ENCODE measurements at regions of chr6 and their contacts with region 1.

Region 1: GRCh38 chr6:125314019-125314581 is 12.3 kb upstream of the HDDC2 start:
- DNase-seq: peak; percentile 69 to 83
- ATAC-seq: peak; percentile 91
- H3K4me3 ChIP-seq: no peak overlapping the region
- H3K27ac ChIP-seq: no peak overlapping the region
- H3K4me1 ChIP-seq: peaks cover 2% of the 10 kb centered on the region in 2 donors
- H3K27me3 ChIP-seq: no peaks in the 10 kb centered on the region

Region 2: DNA sequence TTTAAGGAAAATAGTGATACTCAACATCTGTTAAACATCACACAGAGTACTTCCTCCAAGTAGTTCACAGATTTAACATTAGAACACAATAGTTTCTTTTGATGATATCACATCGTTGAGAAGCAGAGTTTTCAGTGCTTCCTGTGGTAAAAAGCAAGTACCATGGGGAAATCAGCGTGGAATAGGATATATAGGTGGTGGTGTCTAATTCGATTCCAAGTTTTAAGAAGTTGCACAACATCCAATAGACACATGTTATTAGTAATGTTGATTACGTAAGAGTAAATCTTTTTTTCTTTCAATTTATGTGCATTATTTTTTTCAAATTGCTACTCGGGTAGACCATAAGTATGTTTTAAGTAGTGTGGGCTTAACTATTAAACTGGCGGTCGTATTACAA is 1149.8 kb before region 1 on chr6:
- intact Hi-C with region 1: no loop called
- DNase-seq: no peak
- ATAC-seq: no peak
- H3K4me3 ChIP-seq: no peak overlapping the region
- H3K27ac ChIP-seq: no peak overlapping the region
- H3K4me1 ChIP-seq: no peaks in the 10 kb centered on the region
- H3K27me3 ChIP-seq: no peaks in the 10 kb centered on the region

Region 3: DNA sequence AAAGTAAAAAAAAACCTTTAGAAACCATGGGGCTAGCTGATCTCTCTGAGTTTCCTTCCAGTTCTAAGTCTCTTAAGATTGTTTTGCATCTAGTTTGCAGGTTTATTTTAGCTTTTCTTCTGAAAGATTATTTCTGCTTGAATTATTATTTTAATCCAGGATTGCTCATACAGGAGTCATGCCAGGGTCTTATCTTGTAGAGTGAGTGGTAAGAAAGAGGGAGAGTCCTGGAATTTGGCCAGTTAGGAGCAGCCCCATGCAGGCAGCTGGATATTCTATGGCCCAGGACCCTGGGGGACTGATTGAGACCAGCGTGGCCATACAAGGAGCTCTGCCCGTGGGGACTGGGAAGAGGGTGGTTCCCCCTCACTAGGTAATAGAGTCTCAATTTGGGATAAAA is 256.4 kb after region 1 on chr6:
- intact Hi-C with region 1: loop called in 1 of 2 experiments (anchors 10 kb)
- DNase-seq: no peak
- ATAC-seq: peak; percentile 38
- H3K4me3 ChIP-seq: no peak overlapping the region
- H3K27ac ChIP-seq: peak overlapping the region in 1 of 2 donors; percentile 48
- H3K4me1 ChIP-seq: peaks cover 1 to 22% of the 10 kb centered on the region in 2 donors
- H3K27me3 ChIP-seq: no peaks in the 10 kb centered on the region

Region 4: DNA sequence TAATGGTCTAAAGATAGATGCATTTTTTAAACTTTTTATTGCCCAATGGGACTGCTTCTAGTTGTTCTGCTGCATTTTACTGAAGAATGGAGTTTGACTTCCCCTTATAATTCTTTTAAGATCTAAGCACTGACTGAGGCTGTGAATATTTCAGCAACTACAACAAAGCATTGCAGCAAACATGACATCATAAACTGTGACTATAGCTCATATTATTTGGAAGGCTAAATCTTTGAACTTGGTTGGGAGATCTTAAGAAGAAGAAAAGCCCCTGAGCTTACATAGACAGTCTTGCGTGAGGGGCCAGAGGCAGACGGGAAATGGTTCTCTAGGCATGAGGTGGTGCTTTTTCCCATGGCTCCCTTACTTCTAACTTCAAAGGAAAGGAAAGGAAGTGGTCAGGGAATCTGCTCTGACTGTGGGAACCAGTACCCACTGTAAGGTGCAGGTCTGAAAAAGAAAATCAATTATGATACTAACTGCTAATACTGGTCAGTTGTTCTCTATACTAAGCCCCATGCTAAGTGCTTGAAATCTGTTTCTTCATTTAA is 450.1 kb after region 1 on chr6:
- intact Hi-C with region 1: loop called (anchors 2 kb)
- DNase-seq: no peak
- ATAC-seq: no peak
- H3K4me3 ChIP-seq: no peak overlapping the region
- H3K27ac ChIP-seq: peak overlapping the region; percentile 36 to 76
- H3K4me1 ChIP-seq: peaks cover 0 to 2% of the 10 kb centered on the region in 2 donors
- H3K27me3 ChIP-seq: no peaks in the 10 kb centered on the region

Region 5: GRCh38 chr6:125769147-125769783 is 455.2 kb after region 1 on chr6:
- intact Hi-C with region 1: loop called (anchors 2 kb)
- DNase-seq: no peak
- ATAC-seq: no peak
- H3K4me3 ChIP-seq: no peak overlapping the region
- H3K27ac ChIP-seq: peak overlapping the region in 1 of 2 donors; percentile 71
- H3K4me1 ChIP-seq: peaks cover 0 to under 1% of the 10 kb centered on the region in 2 donors
- H3K27me3 ChIP-seq: no peaks in the 10 kb centered on the region

Region 6: DNA sequence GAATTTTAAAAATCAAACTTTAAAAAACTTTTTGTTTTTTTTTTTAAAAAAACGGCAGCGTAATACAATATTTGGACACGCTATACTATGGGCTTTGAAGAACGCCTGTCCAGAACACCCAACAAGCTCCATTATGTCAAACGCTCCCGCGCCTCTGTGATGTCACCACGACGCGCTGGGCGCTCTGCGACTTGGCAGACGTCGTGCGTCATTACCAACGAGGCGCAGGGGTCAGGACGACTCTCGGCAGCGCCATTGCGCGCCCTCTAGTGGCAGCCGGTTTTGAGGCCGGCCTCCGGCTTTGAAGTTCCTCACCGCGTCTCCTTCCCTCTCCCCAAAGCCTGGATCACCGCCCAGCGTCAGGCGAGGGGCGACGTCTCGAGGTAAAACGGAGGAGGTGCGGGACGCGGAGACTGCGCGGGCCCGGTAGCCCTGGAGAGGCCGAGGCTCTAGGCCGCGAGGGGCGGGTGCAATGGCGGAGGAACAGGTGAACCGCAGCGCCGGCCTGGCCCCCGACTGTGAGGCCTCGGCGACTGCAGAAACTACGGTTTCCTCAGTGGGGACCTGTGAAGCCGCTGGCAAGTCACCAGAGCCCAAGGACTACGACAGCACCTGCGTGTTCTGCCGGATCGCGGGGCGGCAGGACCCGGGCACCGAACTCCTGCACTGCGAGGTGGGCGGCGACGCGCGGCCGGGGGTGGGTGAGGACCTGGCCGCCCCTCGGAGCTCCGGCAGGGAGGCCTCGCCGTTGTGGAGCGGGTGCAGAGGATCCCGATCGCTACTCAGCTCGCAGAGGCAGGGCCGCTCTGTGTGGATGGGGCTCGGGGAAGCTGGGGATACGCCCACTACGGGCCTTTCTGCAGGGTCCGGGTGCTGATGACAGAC is 642.6 kb after region 1 on chr6 and contains the start of gene HINT3:
- intact Hi-C with region 1: loop called in 1 of 2 experiments (anchors 5 kb)
- DNase-seq: peak; percentile 99 to 100
- ATAC-seq: peak; percentile 98
- H3K4me3 ChIP-seq: peak within 1 kb of the TSS; percentile 69 to 84
- H3K27ac ChIP-seq: peak within 1 kb of the TSS; percentile 73 to 85
- H3K4me1 ChIP-seq: peaks cover 3 to 7% of the 10 kb centered on the region in 2 donors
- H3K27me3 ChIP-seq: no peaks in the 10 kb centered on the region
- total RNA-seq, gene HINT3: 16.2 to 20.1 TPM

Region 7: GRCh38 chr6:125974214-125974866 is 660.2 kb after region 1 on chr6:
- intact Hi-C with region 1: loop called (anchors 5 kb)
- DNase-seq: no peak
- ATAC-seq: no peak
- H3K4me3 ChIP-seq: no peak overlapping the region
- H3K27ac ChIP-seq: no peak overlapping the region
- H3K4me1 ChIP-seq: no peaks in the 10 kb centered on the region
- H3K27me3 ChIP-seq: no peaks in the 10 kb centered on the region

Measured in aorta (tissue), 5 donors.